AG04449 (cell line): ENCODE measurements at regions of chr14 and their contacts with region 1.

Region 1: DNA sequence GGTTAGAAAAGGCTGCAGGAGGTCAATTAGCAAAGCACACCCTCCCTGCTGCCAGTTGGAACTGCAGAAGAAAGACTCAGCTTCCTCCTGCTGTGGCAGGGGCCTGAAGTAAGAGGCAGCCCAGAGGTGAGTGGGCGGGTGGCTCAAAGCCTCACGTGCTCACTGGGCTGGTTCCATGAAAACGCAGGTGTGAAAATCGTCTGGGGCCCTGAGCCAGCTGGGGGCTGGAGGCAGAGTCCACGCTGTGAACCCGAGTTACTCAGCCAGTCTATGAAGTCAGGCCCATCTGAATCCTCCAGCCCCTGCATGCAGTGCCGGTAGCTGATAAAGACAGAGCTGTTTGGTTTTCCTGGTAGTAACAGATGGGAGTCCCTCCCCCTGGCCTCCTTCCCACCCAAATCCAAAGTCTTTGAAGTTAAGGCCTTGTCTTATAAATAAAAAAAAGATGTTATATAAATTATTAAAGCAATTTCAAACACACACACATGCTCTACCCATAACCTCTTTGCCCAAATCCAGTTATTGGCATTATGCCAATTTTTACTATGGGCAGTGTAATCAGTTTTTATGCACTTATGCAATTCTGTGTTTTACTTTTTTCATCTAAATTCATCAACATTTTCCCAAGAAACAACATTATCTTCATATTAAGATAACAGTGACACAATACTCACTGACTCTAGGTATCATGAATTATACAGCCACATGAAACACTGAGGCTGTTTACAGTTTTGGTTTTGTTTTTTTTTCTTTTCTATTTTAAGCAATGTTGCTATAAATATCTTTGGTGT is 57.9 kb upstream of the PNMA1 start:
- DNase-seq: no peak
- H3K4me3 ChIP-seq: no peak overlapping the region
- CTCF ChIP-seq: no peak

Region 2: GRCh38 chr14:73759714-73760597 is 12.1 kb before region 1 on chr14:
- CTCF ChIA-PET with region 1: interaction called, 15 read pairs
- POLR2A ChIA-PET with region 1: interaction called, 7 read pairs
- DNase-seq: peak; percentile 92
- H3K4me3 ChIP-seq: peak overlapping the region; percentile 89
- CTCF ChIP-seq: no peak

Region 3: DNA sequence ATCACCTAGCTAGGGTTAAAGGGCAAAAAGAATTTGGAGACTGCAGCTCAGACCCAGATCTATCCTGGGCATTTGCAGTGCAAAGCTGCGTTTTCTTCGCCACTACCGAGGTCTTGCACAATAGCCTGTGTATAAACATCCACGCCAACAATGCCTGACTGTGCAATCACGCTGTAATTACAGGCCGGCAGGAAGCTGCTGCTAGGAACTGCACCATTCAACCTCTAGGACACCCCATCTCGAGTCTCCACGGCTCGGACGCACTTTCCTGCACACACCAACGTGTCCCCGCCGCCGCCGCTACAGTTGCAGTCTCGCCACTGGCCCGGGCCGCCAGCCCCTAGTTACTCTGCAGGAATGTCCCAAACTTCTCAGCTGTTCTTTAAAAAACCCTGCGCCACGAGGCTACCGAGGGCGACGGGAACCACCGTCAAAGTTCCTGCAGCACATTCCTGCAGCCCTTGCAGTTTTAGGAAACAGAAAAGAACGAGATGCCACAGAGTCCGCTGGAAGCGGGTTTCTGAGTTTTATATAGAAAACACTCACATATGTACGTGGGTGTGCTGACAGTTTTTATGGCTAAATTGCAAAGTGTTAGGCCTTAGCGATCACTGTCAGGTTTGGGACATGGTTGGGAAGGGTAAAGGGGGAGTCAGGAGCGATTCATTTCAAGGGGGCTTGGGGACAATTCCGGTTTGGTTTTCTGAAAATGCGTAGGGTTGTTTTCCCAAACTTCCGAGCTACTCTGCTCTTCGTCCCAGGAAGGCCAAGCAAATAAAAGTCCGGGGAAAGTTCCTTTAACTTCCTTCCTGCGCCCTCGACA is 14.0 kb after region 1 on chr14:
- CTCF ChIA-PET with region 1: interaction called, 17 read pairs
- POLR2A ChIA-PET with region 1: interaction called, 14 read pairs
- DNase-seq: peak; percentile 76
- H3K4me3 ChIP-seq: peak overlapping the region; percentile 72
- CTCF ChIP-seq: peak; percentile 10